Sigmoid colon (tissue), 7 donors: ENCODE measurements at regions of chr2 and their contacts with region 1.

Region 1: GRCh38 chr2:174487108-174487819 is 435 bp upstream of the GPR155 start:
- DNase-seq: peak; percentile 100
- H3K4me3 ChIP-seq: peak overlapping the region; percentile 74 to 89 (median 84)
- H3K27ac ChIP-seq: peak overlapping the region; percentile 87 to 97 (median 93)
- H3K4me1 ChIP-seq: peaks cover 0 to 20% (median 6%) of the 10 kb centered on the region in 4 donors
- H3K27me3 ChIP-seq: no peaks in the 10 kb centered on the region
- CTCF ChIP-seq: no peak
- EP300 ChIP-seq: no peak
- POLR2A ChIP-seq: peak; percentile 43 to 46

Region 2: GRCh38 chr2:174465327-174465726 is 21.9 kb before region 1 on chr2:
- intact Hi-C with region 1: loop called (anchors 1 kb)
- DNase-seq: no peak
- H3K4me3 ChIP-seq: no peak overlapping the region
- H3K27ac ChIP-seq: no peak overlapping the region
- H3K4me1 ChIP-seq: no peaks in the 10 kb centered on the region
- H3K27me3 ChIP-seq: no peaks in the 10 kb centered on the region
- CTCF ChIP-seq: no peak
- EP300 ChIP-seq: no peak
- POLR2A ChIP-seq: no peak

Region 3: GRCh38 chr2:174561283-174561971 is 74.2 kb after region 1 on chr2:
- intact Hi-C with region 1: loop called (anchors 2 kb)
- DNase-seq: peak; percentile 91
- H3K4me3 ChIP-seq: peak overlapping the region in 2 of 4 donors; percentile 19 to 26
- H3K27ac ChIP-seq: peak overlapping the region; percentile 23 to 77 (median 68)
- H3K4me1 ChIP-seq: peaks cover 0 to 25% (median 20%) of the 10 kb centered on the region in 4 donors
- H3K27me3 ChIP-seq: no peaks in the 10 kb centered on the region
- CTCF ChIP-seq: no peak
- EP300 ChIP-seq: peak in 1 of 4 donors; percentile 8
- POLR2A ChIP-seq: no peak

Region 4: GRCh38 chr2:174603280-174603679 is 116.0 kb after region 1 on chr2:
- intact Hi-C with region 1: loop called (anchors 5 kb)
- DNase-seq: peak; percentile 77
- H3K4me3 ChIP-seq: no peak overlapping the region
- H3K27ac ChIP-seq: peak overlapping the region in 2 of 4 donors; percentile 8 to 33
- H3K4me1 ChIP-seq: peaks cover 0 to 57% (median 37%) of the 10 kb centered on the region in 4 donors
- H3K27me3 ChIP-seq: no peaks in the 10 kb centered on the region
- CTCF ChIP-seq: peak in 3 of 4 experiments; percentile 12 to 33 (median 21)
- EP300 ChIP-seq: no peak
- POLR2A ChIP-seq: no peak

Region 5: DNA sequence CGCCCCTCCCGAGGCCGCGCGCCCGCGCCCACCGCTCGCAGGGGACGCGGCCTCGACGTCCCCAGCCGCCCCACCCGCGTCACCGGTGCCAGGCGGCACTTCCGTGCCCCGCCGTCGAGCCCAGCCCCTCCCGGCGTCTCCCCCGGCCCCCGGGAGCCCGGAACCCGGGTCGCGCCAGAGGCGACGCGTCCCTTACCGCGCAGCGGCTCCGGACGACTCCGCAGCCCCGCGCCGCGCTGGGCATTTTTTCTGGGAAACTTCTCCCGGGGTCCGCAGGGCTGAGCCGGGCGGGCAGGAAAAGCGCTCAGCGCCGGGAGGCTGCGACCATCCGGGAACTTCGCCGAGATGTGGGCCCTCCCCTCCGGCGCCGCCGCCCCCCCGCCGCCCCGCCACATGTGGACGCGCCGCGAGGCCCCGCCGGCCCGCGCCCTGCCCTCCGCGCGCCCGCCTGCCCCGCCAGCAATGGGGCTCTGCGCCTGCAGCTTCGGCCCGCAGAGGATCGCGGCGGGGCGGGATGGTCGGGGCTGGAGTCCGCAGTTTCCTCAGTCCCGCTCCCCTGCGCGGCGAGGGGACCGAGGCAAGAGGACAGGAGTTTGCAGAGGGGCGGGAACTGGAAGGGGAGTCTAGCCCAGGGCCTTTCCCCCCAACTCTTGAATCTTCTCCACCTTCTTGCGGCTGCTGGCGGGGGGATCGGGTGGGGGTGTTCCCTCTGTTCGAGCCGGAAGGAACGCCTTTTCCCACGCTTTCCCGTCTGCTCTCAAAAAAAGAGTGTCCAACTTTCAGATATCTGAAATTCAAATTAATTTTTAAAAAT is 195.5 kb after region 1 on chr2:
- intact Hi-C with region 1: loop called (anchors 2 kb)
- DNase-seq: peak; percentile 88
- H3K4me3 ChIP-seq: peak overlapping the region; percentile 84 to 96 (median 92)
- H3K27ac ChIP-seq: peak overlapping the region; percentile 88 to 95 (median 90)
- H3K4me1 ChIP-seq: peaks cover 0 to 46% (median 27%) of the 10 kb centered on the region in 4 donors
- H3K27me3 ChIP-seq: no peaks in the 10 kb centered on the region
- CTCF ChIP-seq: no peak
- EP300 ChIP-seq: no peak
- POLR2A ChIP-seq: no peak

Region 6: GRCh38 chr2:175330194-175330593 is 842.9 kb after region 1 on chr2:
- intact Hi-C with region 1: no loop called
- DNase-seq: no peak
- H3K4me3 ChIP-seq: no peak overlapping the region
- H3K27ac ChIP-seq: no peak overlapping the region
- H3K4me1 ChIP-seq: no peaks in the 10 kb centered on the region
- H3K27me3 ChIP-seq: no peaks in the 10 kb centered on the region
- CTCF ChIP-seq: no peak
- EP300 ChIP-seq: no peak
- POLR2A ChIP-seq: no peak